Tibial artery (tissue), 4 donors: ENCODE measurements at regions of chr19 and their contacts with region 1.

Region 1: DNA sequence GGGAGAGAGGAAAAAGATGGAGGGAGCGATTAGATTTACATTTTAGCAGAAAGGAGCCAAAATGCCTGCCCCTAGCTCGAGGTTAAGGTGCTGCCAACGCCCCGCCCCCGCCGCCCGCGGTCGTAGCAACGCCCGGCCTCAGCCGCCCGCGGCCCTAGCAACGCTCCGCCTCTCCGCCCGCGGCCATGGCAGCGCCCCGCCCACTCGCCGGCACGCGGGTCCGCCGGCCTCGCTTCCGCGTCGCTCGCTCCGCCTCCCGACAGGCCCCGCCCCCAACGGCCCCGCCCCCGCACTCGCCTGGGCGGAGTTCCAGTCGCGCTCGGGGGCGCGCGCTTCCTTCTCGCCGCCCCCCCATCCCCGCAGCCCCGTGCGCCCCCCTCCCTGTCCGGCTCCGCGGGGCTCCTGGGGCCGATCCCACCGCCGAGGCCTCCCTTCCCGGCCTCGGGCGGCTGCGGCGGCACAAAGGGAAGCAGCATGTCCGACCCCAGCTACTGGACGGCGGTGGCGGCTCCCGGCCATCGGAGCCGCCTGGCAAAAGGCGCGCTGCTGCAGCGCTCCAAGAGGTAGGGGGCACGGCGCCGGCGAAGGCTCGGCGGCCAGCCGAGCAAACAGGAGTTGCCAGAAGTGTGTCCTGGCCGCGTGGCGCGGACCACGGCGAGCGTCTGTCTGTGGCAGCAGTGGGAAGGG is 20.3 kb downstream of the MAST3 start:
- DNase-seq: peak; percentile 76 to 92
- H3K4me3 ChIP-seq: peak overlapping the region; percentile 56 to 68
- H3K27ac ChIP-seq: peak overlapping the region; percentile 58 to 68
- H3K4me1 ChIP-seq: peaks cover 0 to 24% (median 18%) of the 10 kb centered on the region in 4 donors
- H3K27me3 ChIP-seq: no peaks in the 10 kb centered on the region
- CTCF ChIP-seq: no peak

Region 2: GRCh38 chr19:18091217-18091608 is 26.6 kb before region 1 on chr19:
- intact Hi-C with region 1: no loop called
- DNase-seq: peak; percentile 57 to 83
- H3K4me3 ChIP-seq: no peak overlapping the region
- H3K27ac ChIP-seq: peak overlapping the region; percentile 42 to 46
- H3K4me1 ChIP-seq: peaks cover 0 to 37% (median 16%) of the 10 kb centered on the region in 4 donors
- H3K27me3 ChIP-seq: no peaks in the 10 kb centered on the region
- CTCF ChIP-seq: no peak

Region 3: GRCh38 chr19:18152444-18152816 is 34.6 kb after region 1 on chr19:
- intact Hi-C with region 1: loop called (anchors 5 kb)
- DNase-seq: peak; percentile 98
- H3K4me3 ChIP-seq: peak overlapping the region; percentile 76 to 98
- H3K27ac ChIP-seq: peak overlapping the region; percentile 95 to 98
- H3K4me1 ChIP-seq: peaks cover 7 to 43% (median 37%) of the 10 kb centered on the region in 4 donors
- H3K27me3 ChIP-seq: no peaks in the 10 kb centered on the region
- CTCF ChIP-seq: peak; percentile 48 to 65

Region 4: DNA sequence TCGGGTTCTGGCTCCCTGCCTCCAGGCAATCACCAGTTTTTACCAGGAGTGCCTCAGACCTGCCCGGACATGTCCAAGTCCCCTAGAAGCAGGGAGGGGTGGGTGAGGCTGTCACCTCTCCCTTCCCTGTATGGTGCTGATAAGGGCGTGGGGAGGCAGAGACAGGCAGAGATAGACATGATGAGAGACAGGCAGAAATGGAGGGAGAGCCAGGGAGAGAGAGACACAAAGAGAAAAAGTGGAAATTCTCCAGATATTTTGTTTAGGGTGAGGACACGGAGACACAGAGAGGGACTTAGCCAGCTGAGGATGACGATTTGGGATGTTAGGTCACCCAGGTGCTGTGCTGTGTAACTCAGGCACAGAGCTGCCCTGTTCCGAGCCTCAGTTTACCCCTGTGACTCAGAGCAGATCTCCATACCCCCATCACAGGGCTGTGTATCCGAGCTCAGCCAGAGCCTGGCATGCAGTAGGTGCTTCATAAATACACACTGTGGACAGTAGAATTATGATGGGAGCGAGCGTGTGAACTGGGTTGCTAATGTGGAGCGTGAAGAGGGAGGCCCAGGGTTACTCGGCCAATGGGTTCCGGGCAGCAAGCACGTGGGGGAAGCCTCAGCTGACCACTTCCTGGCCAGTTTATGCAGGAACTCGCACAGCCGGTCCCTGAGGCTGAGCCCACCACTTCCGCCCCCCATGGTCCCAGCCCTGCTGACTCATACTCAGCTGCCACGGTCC is 256.2 kb after region 1 on chr19:
- intact Hi-C with region 1: no loop called
- DNase-seq: peak; percentile 95 to 96
- H3K4me3 ChIP-seq: no peak overlapping the region
- H3K27ac ChIP-seq: peak overlapping the region; percentile 69 to 71
- H3K4me1 ChIP-seq: peaks cover 3 to 26% (median 13%) of the 10 kb centered on the region in 4 donors
- H3K27me3 ChIP-seq: no peaks in the 10 kb centered on the region
- CTCF ChIP-seq: no peak